Endothelial cell of umbilical vein (primary cell): ENCODE measurements at regions of chr19 and their contacts with region 1.

Region 1: DNA sequence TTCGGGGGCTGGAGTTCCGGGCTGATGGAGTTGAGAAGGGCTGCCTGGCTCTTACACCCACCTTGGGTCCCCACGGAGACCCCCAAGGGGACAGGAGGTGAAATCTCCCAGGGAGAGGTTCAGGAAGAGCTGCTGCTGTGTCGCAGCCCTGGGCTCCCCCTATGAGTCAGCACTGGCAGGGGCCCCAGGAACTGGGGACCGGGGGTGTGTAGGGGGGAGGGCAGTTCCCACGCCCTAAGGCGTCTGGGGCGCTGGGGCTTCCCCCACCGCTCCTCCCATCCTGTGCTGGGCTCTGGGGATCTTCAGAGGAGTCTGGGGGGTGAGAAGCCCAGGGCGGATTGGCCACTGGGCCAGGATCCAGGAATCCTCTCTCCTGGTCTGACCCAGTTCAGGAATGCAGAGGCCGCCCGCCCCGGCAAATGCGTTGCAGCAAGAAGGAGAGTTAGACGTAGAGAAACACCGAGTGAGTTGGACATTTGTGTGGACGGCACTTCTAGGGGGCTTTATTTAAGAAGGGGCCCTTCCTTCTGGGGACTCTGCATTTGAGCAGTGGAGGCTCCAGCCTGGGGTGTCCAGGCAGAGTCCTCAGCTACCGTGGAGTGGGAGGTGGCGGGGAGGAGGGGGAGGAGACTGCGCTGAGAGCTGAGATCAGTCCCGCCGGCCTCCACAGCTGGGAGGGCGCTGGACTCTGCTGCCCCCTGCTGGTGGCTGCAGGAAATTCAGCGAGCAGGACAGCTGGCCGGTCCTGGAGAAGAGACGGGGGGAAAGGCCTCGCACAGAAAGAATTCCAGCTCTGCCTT is 15.0 kb upstream of the NANOS3 start:
- DNase-seq: peak; percentile 93
- H3K4me3 ChIP-seq: peak overlapping the region; percentile 29 to 48 (median 41)
- H3K27ac ChIP-seq: peak overlapping the region; percentile 99
- H3K4me1 ChIP-seq: peaks cover 17% of the 10 kb centered on the region
- H3K27me3 ChIP-seq: no peaks in the 10 kb centered on the region
- CTCF ChIP-seq: peak; percentile 79 to 94
- POLR2A ChIP-seq: no peak

Region 2: GRCh38 chr19:13597640-13598039 is 264.3 kb before region 1 on chr19:
- CTCF ChIA-PET with region 1: interaction called, 6 read pairs
- POLR2A ChIA-PET with region 1: no interaction called
- dilution Hi-C with region 1: no loop called
- intact Hi-C with region 1: loop called (anchors 1 kb)
- DNase-seq: peak; percentile 66
- H3K4me3 ChIP-seq: no peak overlapping the region
- H3K27ac ChIP-seq: no peak overlapping the region
- H3K4me1 ChIP-seq: no peaks in the 10 kb centered on the region
- H3K27me3 ChIP-seq: no peaks in the 10 kb centered on the region
- CTCF ChIP-seq: peak; percentile 39 to 61
- POLR2A ChIP-seq: no peak

Region 3: DNA sequence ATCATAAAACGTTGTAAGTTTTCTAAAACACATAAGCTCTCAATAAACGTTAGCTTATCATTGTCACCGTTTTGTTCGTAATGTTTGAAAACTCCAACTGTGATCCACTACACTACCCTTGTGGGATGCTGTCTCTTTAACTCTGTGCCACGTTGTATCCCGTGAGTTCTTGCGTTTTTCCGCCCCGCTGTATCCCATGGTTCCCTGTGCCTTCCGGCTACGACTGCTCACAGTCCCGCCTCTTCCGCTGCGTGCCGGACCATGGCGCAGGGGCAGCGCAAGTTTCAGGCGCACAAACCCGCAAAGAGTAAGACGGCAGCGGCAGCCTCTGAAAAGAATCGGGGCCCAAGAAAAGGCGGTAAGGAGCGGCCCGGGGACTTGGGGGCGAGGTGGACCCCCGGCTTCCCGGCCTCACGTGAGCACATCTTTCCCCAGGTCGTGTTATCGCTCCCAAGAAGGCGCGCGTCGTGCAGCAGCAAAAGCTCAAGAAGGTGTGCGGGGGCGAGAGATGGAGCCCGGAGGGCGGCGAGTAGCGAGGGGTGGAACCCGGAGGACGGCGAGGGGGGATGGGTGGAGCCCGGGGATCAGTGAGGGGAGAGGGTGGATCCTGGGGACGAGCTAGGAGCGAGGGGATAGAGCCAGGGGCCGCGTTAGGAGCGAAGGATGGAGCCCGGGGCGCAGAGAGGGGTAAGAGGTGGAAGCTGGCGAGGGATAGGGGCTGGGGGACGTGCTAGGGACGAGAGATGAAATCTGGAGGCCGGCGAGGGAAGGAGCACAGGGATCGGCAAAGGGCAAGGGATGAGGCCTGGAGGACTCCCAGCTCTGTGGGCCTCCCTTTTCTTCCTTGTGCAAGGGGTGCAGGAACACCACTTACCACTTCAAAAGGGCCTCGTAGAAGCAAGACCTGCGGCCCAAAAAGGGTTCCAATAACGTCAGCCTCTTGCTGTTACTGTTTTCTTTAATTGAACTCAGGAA is 87.4 kb before region 1 on chr19 and contains the start of gene C19orf53:
- CTCF ChIA-PET with region 1: interaction called, 16 read pairs
- POLR2A ChIA-PET with region 1: interaction called, 5 read pairs
- dilution Hi-C with region 1: no loop called
- intact Hi-C with region 1: no loop called
- DNase-seq: peak; percentile 95
- H3K4me3 ChIP-seq: peak within 1 kb of the TSS; percentile 63 to 77 (median 75)
- H3K27ac ChIP-seq: peak within 1 kb of the TSS; percentile 62
- H3K4me1 ChIP-seq: peaks cover 9% of the 10 kb centered on the region
- H3K27me3 ChIP-seq: no peaks in the 10 kb centered on the region
- CTCF ChIP-seq: no peak
- POLR2A ChIP-seq: peak; percentile 86
- total RNA-seq, gene C19orf53: 113 and 126 TPM in 2 replicates

Region 4: GRCh38 chr19:13794757-13795589 is 67.0 kb before region 1 on chr19 and contains the start of gene ZSWIM4:
- CTCF ChIA-PET with region 1: interaction called, 31 read pairs
- POLR2A ChIA-PET with region 1: no interaction called
- dilution Hi-C with region 1: no loop called
- intact Hi-C with region 1: loop called (anchors 1 kb)
- DNase-seq: peak; percentile 100
- H3K4me3 ChIP-seq: peak within 1 kb of the TSS; percentile 72 to 97 (median 87)
- H3K27ac ChIP-seq: peak within 1 kb of the TSS; percentile 95
- H3K4me1 ChIP-seq: peaks cover 20% of the 10 kb centered on the region
- H3K27me3 ChIP-seq: no peaks in the 10 kb centered on the region
- CTCF ChIP-seq: no peak
- POLR2A ChIP-seq: peak; percentile 5
- total RNA-seq, gene ZSWIM4: 23.1 and 26.6 TPM in 2 replicates

Region 5: GRCh38 chr19:13827244-13828030 is 34.5 kb before region 1 on chr19:
- CTCF ChIA-PET with region 1: interaction called, 15 read pairs
- POLR2A ChIA-PET with region 1: interaction called, 8 read pairs
- dilution Hi-C with region 1: no loop called
- intact Hi-C with region 1: no loop called
- DNase-seq: no peak
- H3K4me3 ChIP-seq: no peak overlapping the region
- H3K27ac ChIP-seq: no peak overlapping the region
- H3K4me1 ChIP-seq: no peaks in the 10 kb centered on the region
- H3K27me3 ChIP-seq: no peaks in the 10 kb centered on the region
- CTCF ChIP-seq: no peak
- POLR2A ChIP-seq: no peak

Region 6: GRCh38 chr19:13839130-13839937 is 22.6 kb before region 1 on chr19:
- CTCF ChIA-PET with region 1: interaction called, 77 read pairs
- POLR2A ChIA-PET with region 1: interaction called, 25 read pairs
- dilution Hi-C with region 1: no loop called
- intact Hi-C with region 1: loop called (anchors 1 kb)
- DNase-seq: peak; percentile 87
- H3K4me3 ChIP-seq: peak overlapping the region in 2 of 3 experiments; percentile 79 to 82
- H3K27ac ChIP-seq: peak overlapping the region; percentile 94
- H3K4me1 ChIP-seq: peaks cover 39% of the 10 kb centered on the region
- H3K27me3 ChIP-seq: no peaks in the 10 kb centered on the region
- CTCF ChIP-seq: no peak
- POLR2A ChIP-seq: peak; percentile 77

Region 7: DNA sequence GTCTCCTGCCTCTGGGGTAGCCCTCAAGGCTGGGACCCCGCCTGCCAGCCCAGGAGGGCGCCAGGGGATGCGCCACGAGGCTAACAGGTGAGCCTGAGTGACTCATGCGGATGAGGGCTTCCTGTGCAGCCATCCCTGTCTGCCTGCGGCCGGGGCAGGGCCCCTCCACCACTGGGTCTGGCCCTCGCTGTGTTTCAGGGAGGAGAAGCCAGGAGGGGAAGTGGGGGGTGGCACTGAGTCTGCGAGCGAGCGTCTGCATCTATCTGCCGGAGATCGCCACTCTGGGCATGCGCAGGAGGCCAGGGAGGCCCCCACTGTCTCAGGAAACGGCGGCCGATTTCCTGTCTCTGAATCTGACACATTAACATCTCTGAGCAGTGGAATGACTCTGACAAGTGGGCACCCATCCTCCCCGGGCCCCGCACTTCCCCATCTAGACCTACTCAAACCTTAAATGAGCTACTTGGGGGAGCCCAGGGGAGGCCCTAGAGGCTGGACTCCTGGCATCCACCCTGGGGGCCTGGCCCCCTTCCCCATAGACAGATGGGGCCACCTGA is 124.5 kb after region 1 on chr19:
- CTCF ChIA-PET with region 1: no interaction called
- POLR2A ChIA-PET with region 1: no interaction called
- dilution Hi-C with region 1: no loop called
- intact Hi-C with region 1: no loop called
- DNase-seq: peak; percentile 90
- H3K4me3 ChIP-seq: peak overlapping the region in 1 of 3 experiments; percentile 15
- H3K27ac ChIP-seq: peak overlapping the region; percentile 84
- H3K4me1 ChIP-seq: peaks cover 22% of the 10 kb centered on the region
- H3K27me3 ChIP-seq: no peaks in the 10 kb centered on the region
- CTCF ChIP-seq: no peak
- POLR2A ChIP-seq: peak; percentile 58